ENCODE measurements at regions of chr4 and their contacts with region 1.

Region 1: GRCh38 chr4:119212234-119212963 is at the start of gene USP53:
- DNase-seq: peak; percentile 94 to 99 (median 98)
- ATAC-seq: peak; percentile 94
- H3K4me3 ChIP-seq: peak within 1 kb of the TSS; percentile 74 to 89
- H3K4me3 Mint-ChIP-seq: peak within 1 kb of the TSS; percentile 91
- H3K27ac ChIP-seq: peak within 1 kb of the TSS; percentile 70 to 73
- H3K27ac Mint-ChIP-seq: peak within 1 kb of the TSS; percentile 95
- H3K4me1 ChIP-seq: peaks cover 8% of the 10 kb centered on the region
- H3K4me1 Mint-ChIP-seq: peaks cover 56% of the 10 kb centered on the region
- H3K27me3 ChIP-seq: no peaks in the 10 kb centered on the region
- H3K27me3 Mint-ChIP-seq: no peaks in the 10 kb centered on the region
- CTCF ChIP-seq: no peak
- total RNA-seq, gene USP53: 24.7 to 27.8 TPM

Region 2: GRCh38 chr4:118835571-118836300 is 376.7 kb before region 1 on chr4 and contains the start of gene SEC24D:
- CTCF ChIA-PET with region 1: no interaction called
- POLR2A ChIA-PET with region 1: no interaction called
- intact Hi-C with region 1: loop called (anchors 1 to 10 kb)
- DNase-seq: peak; percentile 67 to 90 (median 79)
- ATAC-seq: peak; percentile 81
- H3K4me3 ChIP-seq: peak within 1 kb of the TSS; percentile 76 to 80
- H3K4me3 Mint-ChIP-seq: peak within 1 kb of the TSS; percentile 100
- H3K27ac ChIP-seq: peak within 1 kb of the TSS; percentile 69 to 87
- H3K27ac Mint-ChIP-seq: peak within 1 kb of the TSS; percentile 97
- H3K4me1 ChIP-seq: peaks cover 6% of the 10 kb centered on the region
- H3K4me1 Mint-ChIP-seq: peaks cover 26% of the 10 kb centered on the region
- H3K27me3 ChIP-seq: no peaks in the 10 kb centered on the region
- H3K27me3 Mint-ChIP-seq: no peaks in the 10 kb centered on the region
- CTCF ChIP-seq: no peak
- total RNA-seq, gene SEC24D: 16.7 to 17.2 TPM

Region 3: DNA sequence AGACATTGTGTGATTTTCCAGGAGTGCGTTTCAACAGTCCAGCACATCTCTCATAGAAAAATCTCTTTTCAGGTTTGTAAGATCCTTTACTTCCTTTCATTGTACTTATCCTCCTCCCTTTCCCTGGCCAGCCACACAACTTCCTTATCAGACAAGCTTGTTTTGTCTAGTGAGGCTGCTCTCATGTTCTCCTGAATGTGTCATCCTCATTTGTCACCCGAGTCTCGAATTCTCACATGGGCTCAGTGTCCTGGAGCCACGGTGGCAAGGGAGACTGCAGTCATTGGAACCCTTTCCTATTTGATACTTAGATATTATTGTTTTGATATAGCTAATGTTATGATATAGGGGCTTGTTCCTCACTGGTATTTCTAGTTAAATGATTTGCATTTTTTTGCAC is 306.8 kb before region 1 on chr4:
- CTCF ChIA-PET with region 1: no interaction called
- POLR2A ChIA-PET with region 1: no interaction called
- intact Hi-C with region 1: no loop called
- DNase-seq: no peak
- ATAC-seq: no peak
- H3K4me3 ChIP-seq: no peak overlapping the region
- H3K4me3 Mint-ChIP-seq: no peak overlapping the region
- H3K27ac ChIP-seq: no peak overlapping the region
- H3K27ac Mint-ChIP-seq: no peak overlapping the region
- H3K4me1 ChIP-seq: no peaks in the 10 kb centered on the region
- H3K4me1 Mint-ChIP-seq: no peaks in the 10 kb centered on the region
- H3K27me3 ChIP-seq: peaks cover 0 to 2% of the 10 kb centered on the region in 2 experiments
- H3K27me3 Mint-ChIP-seq: peaks cover 22% of the 10 kb centered on the region
- CTCF ChIP-seq: no peak

Region 4: GRCh38 chr4:118981839-118982381 is 230.5 kb before region 1 on chr4:
- CTCF ChIA-PET with region 1: no interaction called
- POLR2A ChIA-PET with region 1: no interaction called
- intact Hi-C with region 1: no loop called
- DNase-seq: peak; percentile 16 to 61 (median 50)
- ATAC-seq: peak; percentile 81
- H3K4me3 ChIP-seq: no peak overlapping the region
- H3K4me3 Mint-ChIP-seq: no peak overlapping the region
- H3K27ac ChIP-seq: no peak overlapping the region
- H3K27ac Mint-ChIP-seq: no peak overlapping the region
- H3K4me1 ChIP-seq: no peaks in the 10 kb centered on the region
- H3K4me1 Mint-ChIP-seq: peaks cover 2% of the 10 kb centered on the region
- H3K27me3 ChIP-seq: no peaks in the 10 kb centered on the region
- H3K27me3 Mint-ChIP-seq: peaks cover 5% of the 10 kb centered on the region
- CTCF ChIP-seq: peak; percentile 75

Region 5: DNA sequence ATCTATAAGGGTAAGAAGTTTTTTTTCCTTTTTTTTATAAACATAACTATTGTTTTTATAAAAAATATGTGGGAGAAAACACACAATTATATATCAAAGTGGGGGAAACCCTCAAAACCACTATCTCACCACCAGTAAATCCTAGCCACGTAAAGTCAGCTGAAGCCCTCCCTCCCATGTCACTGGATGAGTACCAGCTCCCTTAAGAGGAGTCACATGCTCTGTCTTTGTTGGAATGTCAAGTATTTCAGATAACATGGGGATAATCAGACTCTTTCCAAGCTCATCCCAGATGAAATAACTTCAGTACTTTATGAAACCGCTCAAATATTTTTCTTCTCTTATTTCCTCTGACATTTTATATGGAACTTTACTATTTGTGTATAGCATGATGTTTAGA is 74.4 kb before region 1 on chr4:
- CTCF ChIA-PET with region 1: interaction called, 5 read pairs
- POLR2A ChIA-PET with region 1: interaction called, 14 read pairs
- intact Hi-C with region 1: loop called in 1 of 2 experiments (anchors 2 kb)
- DNase-seq: peak in 2 of 9 experiments; percentile 8 to 29
- ATAC-seq: no peak
- H3K4me3 ChIP-seq: no peak overlapping the region
- H3K4me3 Mint-ChIP-seq: no peak overlapping the region
- H3K27ac ChIP-seq: no peak overlapping the region
- H3K27ac Mint-ChIP-seq: peak overlapping the region; percentile 14
- H3K4me1 ChIP-seq: peaks cover 35% of the 10 kb centered on the region
- H3K4me1 Mint-ChIP-seq: peaks cover 45% of the 10 kb centered on the region
- H3K27me3 ChIP-seq: no peaks in the 10 kb centered on the region
- H3K27me3 Mint-ChIP-seq: no peaks in the 10 kb centered on the region
- CTCF ChIP-seq: no peak

Region 6: GRCh38 chr4:119233750-119234149 is 21.4 kb after region 1 on chr4:
- CTCF ChIA-PET with region 1: interaction called, 4 read pairs
- POLR2A ChIA-PET with region 1: no interaction called
- intact Hi-C with region 1: loop called in 1 of 2 experiments (anchors 2 kb)
- DNase-seq: no peak
- ATAC-seq: peak; percentile 55
- H3K4me3 ChIP-seq: no peak overlapping the region
- H3K4me3 Mint-ChIP-seq: peak overlapping the region; percentile 19
- H3K27ac ChIP-seq: no peak overlapping the region
- H3K27ac Mint-ChIP-seq: peak overlapping the region; percentile 66
- H3K4me1 ChIP-seq: peaks cover 18% of the 10 kb centered on the region
- H3K4me1 Mint-ChIP-seq: peaks cover 81% of the 10 kb centered on the region
- H3K27me3 ChIP-seq: no peaks in the 10 kb centered on the region
- H3K27me3 Mint-ChIP-seq: no peaks in the 10 kb centered on the region
- CTCF ChIP-seq: no peak

Region 7: DNA sequence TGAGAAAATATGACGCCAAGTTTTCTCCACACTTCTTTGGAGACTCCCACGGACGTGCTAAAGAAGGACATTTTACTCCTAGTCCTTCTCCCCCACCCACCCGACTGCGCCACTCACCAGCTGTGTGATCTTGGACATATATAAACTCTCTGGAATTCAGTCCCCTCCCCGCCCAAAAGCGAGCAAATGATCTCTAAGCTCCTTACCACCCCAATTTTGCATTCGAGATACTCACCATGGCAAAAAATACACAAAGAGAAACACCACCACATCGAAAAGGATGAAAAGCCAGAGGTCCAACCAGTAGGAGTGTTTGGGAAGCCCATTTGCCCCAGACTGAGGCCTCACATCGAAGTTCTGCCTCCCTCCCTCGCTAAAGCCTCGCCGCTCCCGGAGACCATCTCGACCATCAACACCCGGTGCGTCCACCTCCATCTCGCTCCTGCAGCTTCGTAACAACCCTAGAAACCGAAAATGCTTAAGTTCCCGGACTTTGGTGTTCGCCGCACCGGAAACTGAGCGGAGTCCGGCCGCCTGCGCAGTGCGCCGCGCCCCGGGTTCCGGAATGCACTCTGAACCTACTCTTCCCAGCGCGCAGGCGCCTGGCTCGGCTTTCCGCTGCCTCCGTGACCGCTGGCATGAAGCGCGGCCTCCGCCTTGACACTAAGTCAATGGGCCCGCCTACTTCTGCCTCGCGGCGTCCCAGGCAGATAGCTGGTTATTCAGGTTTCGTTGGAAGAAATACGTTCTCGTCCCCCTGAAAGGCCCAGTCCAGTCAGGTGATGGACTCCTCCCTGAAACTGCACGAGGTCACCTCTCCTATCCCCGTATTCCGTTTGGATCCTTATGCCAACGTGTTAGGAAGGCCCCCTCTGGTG is 87.9 kb after region 1 on chr4:
- CTCF ChIA-PET with region 1: interaction called, 4 read pairs
- POLR2A ChIA-PET with region 1: interaction called, 11 read pairs
- intact Hi-C with region 1: loop called (anchors 1 to 2 kb)
- DNase-seq: peak; percentile 79 to 95 (median 89)
- ATAC-seq: peak; percentile 94
- H3K4me3 ChIP-seq: peak overlapping the region; percentile 92 to 97
- H3K4me3 Mint-ChIP-seq: peak overlapping the region; percentile 99
- H3K27ac ChIP-seq: peak overlapping the region; percentile 93 to 95
- H3K27ac Mint-ChIP-seq: peak overlapping the region; percentile 99
- H3K4me1 ChIP-seq: peaks cover 20% of the 10 kb centered on the region
- H3K4me1 Mint-ChIP-seq: peaks cover 35% of the 10 kb centered on the region
- H3K27me3 ChIP-seq: no peaks in the 10 kb centered on the region
- H3K27me3 Mint-ChIP-seq: no peaks in the 10 kb centered on the region
- CTCF ChIP-seq: no peak

Region 8: GRCh38 chr4:120232050-120232449 is 1019.7 kb after region 1 on chr4:
- CTCF ChIA-PET with region 1: no interaction called
- POLR2A ChIA-PET with region 1: no interaction called
- intact Hi-C with region 1: no loop called
- DNase-seq: no peak
- ATAC-seq: no peak
- H3K4me3 ChIP-seq: no peak overlapping the region
- H3K4me3 Mint-ChIP-seq: no peak overlapping the region
- H3K27ac ChIP-seq: no peak overlapping the region
- H3K27ac Mint-ChIP-seq: no peak overlapping the region
- H3K4me1 ChIP-seq: no peaks in the 10 kb centered on the region
- H3K4me1 Mint-ChIP-seq: no peaks in the 10 kb centered on the region
- H3K27me3 ChIP-seq: no peaks in the 10 kb centered on the region
- H3K27me3 Mint-ChIP-seq: peaks cover 10% of the 10 kb centered on the region
- CTCF ChIP-seq: no peak